ENCODE measurements at regions of chr11 and their contacts with region 1.

Region 1: GRCh38 chr11:118928108-118928870 is 2.6 kb upstream of the BCL9L start:
- DNase-seq: peak; percentile 96
- ATAC-seq: peak; percentile 68
- H3K4me3 ChIP-seq: peak overlapping the region; percentile 73 to 75
- H3K27ac ChIP-seq: peak overlapping the region; percentile 100
- H3K4me1 ChIP-seq: peaks cover 42 to 82% of the 10 kb centered on the region in 2 experiments
- H3K27me3 ChIP-seq: no peaks in the 10 kb centered on the region
- CTCF ChIP-seq: peak in 2 of 3 experiments; percentile 92 to 95; a peak in 4 of 6 replicates
- POLR2A ChIP-seq: no peak
- RAD21 ChIP-seq: no peak

Region 2: GRCh38 chr11:117704395-117705100 is 1223.7 kb before region 1 on chr11:
- CTCF ChIA-PET with region 1: no interaction called
- POLR2A ChIA-PET with region 1: no interaction called
- RAD21 ChIA-PET with region 1: no interaction called
- intact Hi-C with region 1: no loop called
- DNase-seq: no peak
- ATAC-seq: no peak
- H3K4me3 ChIP-seq: no peak overlapping the region
- H3K27ac ChIP-seq: no peak overlapping the region
- H3K4me1 ChIP-seq: no peaks in the 10 kb centered on the region
- H3K27me3 ChIP-seq: peaks cover 57% of the 10 kb centered on the region
- CTCF ChIP-seq: no peak
- POLR2A ChIP-seq: no peak
- RAD21 ChIP-seq: no peak

Region 3: GRCh38 chr11:118783724-118784495 is 144.4 kb before region 1 on chr11:
- CTCF ChIA-PET with region 1: no interaction called
- POLR2A ChIA-PET with region 1: no interaction called
- RAD21 ChIA-PET with region 1: no interaction called
- intact Hi-C with region 1: no loop called
- DNase-seq: no peak
- ATAC-seq: no peak
- H3K4me3 ChIP-seq: no peak overlapping the region
- H3K27ac ChIP-seq: no peak overlapping the region
- H3K4me1 ChIP-seq: peaks cover 4 to 20% of the 10 kb centered on the region in 2 experiments
- H3K27me3 ChIP-seq: no peaks in the 10 kb centered on the region
- CTCF ChIP-seq: no peak
- POLR2A ChIP-seq: no peak
- RAD21 ChIP-seq: no peak

Region 4: GRCh38 chr11:118956094-118956846 is 28.0 kb after region 1 on chr11 and contains the start of gene UPK2:
- CTCF ChIA-PET with region 1: interaction called, 3 read pairs
- POLR2A ChIA-PET with region 1: interaction called, 4 read pairs
- RAD21 ChIA-PET with region 1: no interaction called
- intact Hi-C with region 1: loop called (anchors 2 kb)
- DNase-seq: peak; percentile 78
- ATAC-seq: peak; percentile 99
- H3K4me3 ChIP-seq: no peak within 1 kb of the TSS
- H3K27ac ChIP-seq: no peak within 1 kb of the TSS
- H3K4me1 ChIP-seq: peaks cover 0 to 18% of the 10 kb centered on the region in 2 experiments; a peak in 2 of 4 replicates
- H3K27me3 ChIP-seq: no peaks in the 10 kb centered on the region
- CTCF ChIP-seq: peak; percentile 96 to 97 (median 96)
- POLR2A ChIP-seq: no peak
- RAD21 ChIP-seq: peak; percentile 100
- total RNA-seq, gene UPK2: 0.42 TPM

Region 5: GRCh38 chr11:118988280-118988679 is 60.0 kb after region 1 on chr11:
- CTCF ChIA-PET with region 1: no interaction called
- POLR2A ChIA-PET with region 1: no interaction called
- RAD21 ChIA-PET with region 1: no interaction called
- intact Hi-C with region 1: no loop called
- DNase-seq: no peak
- ATAC-seq: peak; percentile 59
- H3K4me3 ChIP-seq: no peak overlapping the region
- H3K27ac ChIP-seq: peak overlapping the region; percentile 33
- H3K4me1 ChIP-seq: peaks cover 11 to 26% of the 10 kb centered on the region in 2 experiments
- H3K27me3 ChIP-seq: no peaks in the 10 kb centered on the region
- CTCF ChIP-seq: no peak
- POLR2A ChIP-seq: no peak
- RAD21 ChIP-seq: no peak

Measured in HCT116 (cell line).